ENCODE measurements at regions of chrX and their contacts with region 1.

Region 1: DNA sequence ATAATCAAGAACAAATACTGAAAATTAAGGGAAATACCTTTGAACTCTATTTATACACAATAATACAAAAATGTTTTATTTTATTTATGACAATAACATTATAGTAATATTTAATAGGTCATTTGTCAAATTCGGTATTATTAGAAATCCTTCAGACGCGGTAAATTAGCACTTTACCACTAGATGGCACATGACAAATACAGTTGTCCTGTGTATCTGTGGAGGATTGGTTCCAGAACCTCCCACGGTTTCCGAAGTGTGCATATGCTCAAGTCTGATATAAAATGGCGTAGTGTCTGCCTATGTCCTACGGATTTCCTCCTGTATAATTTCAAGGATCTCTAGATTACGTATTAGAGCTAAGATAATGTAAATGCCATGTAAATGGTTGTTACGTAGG is 8.1 kb upstream of the LINC00632 start:
- DNase-seq: no peak
- H3K4me3 ChIP-seq: no peak overlapping the region
- H3K27ac ChIP-seq: no peak overlapping the region
- H3K4me1 ChIP-seq: no peaks in the 10 kb centered on the region
- H3K27me3 ChIP-seq: no peaks in the 10 kb centered on the region
- CTCF ChIP-seq: peak; percentile 11 to 44 (median 41)
- EP300 ChIP-seq: no peak
- POLR2A ChIP-seq: no peak

Region 2: GRCh38 chrX:140733769-140734342 is 32.4 kb after region 1 on chrX:
- intact Hi-C with region 1: loop called (anchors 1 kb)
- DNase-seq: no peak
- H3K4me3 ChIP-seq: no peak overlapping the region
- H3K27ac ChIP-seq: no peak overlapping the region
- H3K4me1 ChIP-seq: no peaks in the 10 kb centered on the region
- H3K27me3 ChIP-seq: no peaks in the 10 kb centered on the region
- CTCF ChIP-seq: peak; percentile 56 to 71 (median 61)
- EP300 ChIP-seq: no peak
- POLR2A ChIP-seq: no peak

Measured in esophagus muscularis mucosa (tissue), 4 donors.